Endothelial cell of umbilical vein (primary cell): ENCODE measurements at regions of chr10 and their contacts with region 1.

Region 1: DNA sequence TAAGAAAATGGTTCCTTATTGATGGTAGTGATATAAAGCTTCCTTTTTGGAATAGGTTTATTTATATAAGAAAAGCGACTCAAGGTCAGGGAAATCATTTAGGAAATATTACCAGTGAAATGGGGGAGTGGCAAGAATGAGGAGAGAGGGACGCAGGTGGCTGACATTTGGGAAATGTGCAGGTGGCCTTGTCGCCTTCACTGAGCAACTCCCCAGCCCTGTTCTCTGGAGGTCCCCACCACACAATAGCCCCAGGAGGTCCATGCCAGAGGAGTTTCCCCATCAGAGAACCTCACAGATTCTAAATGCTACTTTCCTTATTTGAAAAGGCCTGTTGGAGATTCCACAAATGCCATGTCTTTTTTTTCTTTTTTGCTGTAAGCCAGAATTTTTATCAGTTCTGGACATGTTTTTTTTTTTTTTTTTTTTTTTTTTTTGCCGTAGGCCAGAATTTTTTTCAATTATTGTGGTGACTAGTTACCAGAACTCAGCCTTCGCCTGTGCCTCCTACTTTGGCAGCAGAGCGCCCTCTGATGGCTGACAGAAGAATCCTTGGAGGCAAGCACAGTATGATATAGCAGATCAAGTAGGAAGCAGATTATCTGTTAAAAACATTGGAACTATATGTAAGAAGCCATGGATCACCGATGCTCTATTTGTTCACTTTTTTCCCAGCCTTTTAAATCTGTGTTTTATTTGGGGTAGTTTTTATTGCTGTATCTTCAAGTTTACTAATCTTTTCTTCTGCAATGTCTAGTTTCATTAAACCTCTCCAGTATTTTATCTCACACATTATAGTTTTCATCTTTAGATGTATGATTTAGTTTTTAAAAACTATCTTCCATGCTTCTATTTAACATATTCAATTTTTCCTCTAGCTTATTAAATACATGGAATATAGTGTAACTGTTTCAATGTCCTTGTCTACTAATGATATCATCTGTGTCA is 18.6 kb downstream of the OPALIN start:
- DNase-seq: peak; percentile 53
- H3K4me3 ChIP-seq: no peak overlapping the region
- H3K27ac ChIP-seq: no peak overlapping the region
- H3K4me1 ChIP-seq: no peaks in the 10 kb centered on the region
- H3K27me3 ChIP-seq: peaks cover 3 to 4% of the 10 kb centered on the region in 2 experiments
- CTCF ChIP-seq: peak; percentile 77 to 79
- POLR2A ChIP-seq: no peak

Region 2: GRCh38 chr10:96053985-96054384 is 286.2 kb before region 1 on chr10:
- CTCF ChIA-PET with region 1: no interaction called
- POLR2A ChIA-PET with region 1: no interaction called
- dilution Hi-C with region 1: no loop called
- intact Hi-C with region 1: no loop called
- DNase-seq: peak; percentile 92
- H3K4me3 ChIP-seq: peak overlapping the region in 1 of 3 experiments; percentile 15
- H3K27ac ChIP-seq: peak overlapping the region; percentile 74
- H3K4me1 ChIP-seq: peaks cover 44% of the 10 kb centered on the region
- H3K27me3 ChIP-seq: no peaks in the 10 kb centered on the region
- CTCF ChIP-seq: no peak
- POLR2A ChIP-seq: no peak

Region 3: DNA sequence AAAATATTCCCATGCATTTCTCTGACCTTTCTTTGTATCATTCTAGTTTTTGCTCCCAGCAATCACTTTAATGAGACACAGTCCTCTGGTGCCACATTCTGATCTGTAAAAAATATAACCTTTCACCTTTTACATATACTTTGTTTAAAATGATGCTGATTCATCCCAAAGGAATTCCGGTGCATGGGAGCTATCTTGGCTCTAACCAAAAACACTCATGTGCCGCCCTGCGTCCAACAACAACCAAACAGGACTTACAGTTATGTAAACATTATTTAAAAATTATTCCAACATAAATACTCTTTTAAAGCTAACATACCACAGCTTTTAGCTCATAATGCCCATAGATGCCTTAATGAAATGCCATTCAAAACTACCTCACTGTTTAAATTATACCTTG is 26.3 kb after region 1 on chr10:
- CTCF ChIA-PET with region 1: interaction called, 11 read pairs
- POLR2A ChIA-PET with region 1: no interaction called
- dilution Hi-C with region 1: no loop called
- intact Hi-C with region 1: loop called (anchors 1 kb)
- DNase-seq: peak; percentile 17
- H3K4me3 ChIP-seq: no peak overlapping the region
- H3K27ac ChIP-seq: no peak overlapping the region
- H3K4me1 ChIP-seq: peaks cover 10% of the 10 kb centered on the region
- H3K27me3 ChIP-seq: no peaks in the 10 kb centered on the region
- CTCF ChIP-seq: no peak
- POLR2A ChIP-seq: no peak

Region 4: DNA sequence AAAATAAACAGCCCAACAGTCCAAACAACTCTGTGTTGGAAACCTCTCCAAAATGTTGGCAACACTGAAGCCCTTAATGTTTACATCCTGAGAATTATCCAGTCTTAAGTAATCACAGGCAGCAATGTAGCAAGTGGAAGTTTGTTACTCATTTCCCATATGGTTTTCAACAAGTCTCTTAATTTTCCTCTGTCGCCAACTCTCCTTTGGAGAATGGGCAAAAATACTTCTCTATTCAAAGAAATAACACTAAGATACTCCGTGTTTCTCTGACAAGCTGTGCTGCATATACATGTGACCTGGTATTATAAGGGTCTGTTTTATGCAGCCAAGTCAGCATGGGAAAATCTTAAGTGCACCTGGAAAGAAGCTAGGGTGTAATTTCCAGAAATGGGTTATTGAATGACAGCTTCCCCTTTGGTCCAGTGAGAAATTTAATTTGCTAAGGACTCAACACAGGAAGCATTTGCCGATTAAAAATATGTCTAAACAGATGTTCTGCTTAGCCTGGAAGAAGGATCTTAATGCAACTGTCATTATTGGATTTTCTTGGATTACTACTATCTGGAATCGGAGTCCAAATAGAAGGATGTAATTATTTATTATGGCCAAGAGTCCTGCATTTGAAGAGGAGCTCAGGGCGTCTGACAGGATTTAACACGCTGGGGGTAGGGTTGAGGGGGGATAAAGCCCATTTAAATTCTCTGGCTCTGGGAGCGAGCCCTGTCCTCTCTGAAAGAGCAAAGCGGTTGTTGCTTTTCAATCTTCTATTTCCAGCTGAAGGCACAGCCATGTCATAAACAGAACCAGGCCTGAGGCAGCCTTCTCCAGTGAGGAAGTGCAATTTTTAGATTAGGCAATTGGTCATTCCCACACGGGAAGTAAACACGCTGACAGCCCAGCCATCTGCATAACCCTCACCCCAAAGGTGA is 100.4 kb after region 1 on chr10:
- CTCF ChIA-PET with region 1: no interaction called
- POLR2A ChIA-PET with region 1: no interaction called
- dilution Hi-C with region 1: no loop called
- intact Hi-C with region 1: no loop called
- DNase-seq: no peak
- H3K4me3 ChIP-seq: no peak overlapping the region
- H3K27ac ChIP-seq: no peak overlapping the region
- H3K4me1 ChIP-seq: no peaks in the 10 kb centered on the region
- H3K27me3 ChIP-seq: peaks cover 0 to 2% of the 10 kb centered on the region in 2 experiments
- CTCF ChIP-seq: no peak
- POLR2A ChIP-seq: no peak

Region 5: GRCh38 chr10:96456296-96456840 is 116.1 kb after region 1 on chr10:
- CTCF ChIA-PET with region 1: no interaction called
- POLR2A ChIA-PET with region 1: no interaction called
- dilution Hi-C with region 1: no loop called
- intact Hi-C with region 1: no loop called
- DNase-seq: no peak
- H3K4me3 ChIP-seq: no peak overlapping the region
- H3K27ac ChIP-seq: no peak overlapping the region
- H3K4me1 ChIP-seq: no peaks in the 10 kb centered on the region
- H3K27me3 ChIP-seq: no peaks in the 10 kb centered on the region
- CTCF ChIP-seq: no peak
- POLR2A ChIP-seq: no peak